ENCODE measurements at regions of chr17 and their contacts with region 1.

Region 1: GRCh38 chr17:9968902-9969617 is 64.0 kb upstream of the RCVRN start:
- DNase-seq: no peak

Region 2: DNA sequence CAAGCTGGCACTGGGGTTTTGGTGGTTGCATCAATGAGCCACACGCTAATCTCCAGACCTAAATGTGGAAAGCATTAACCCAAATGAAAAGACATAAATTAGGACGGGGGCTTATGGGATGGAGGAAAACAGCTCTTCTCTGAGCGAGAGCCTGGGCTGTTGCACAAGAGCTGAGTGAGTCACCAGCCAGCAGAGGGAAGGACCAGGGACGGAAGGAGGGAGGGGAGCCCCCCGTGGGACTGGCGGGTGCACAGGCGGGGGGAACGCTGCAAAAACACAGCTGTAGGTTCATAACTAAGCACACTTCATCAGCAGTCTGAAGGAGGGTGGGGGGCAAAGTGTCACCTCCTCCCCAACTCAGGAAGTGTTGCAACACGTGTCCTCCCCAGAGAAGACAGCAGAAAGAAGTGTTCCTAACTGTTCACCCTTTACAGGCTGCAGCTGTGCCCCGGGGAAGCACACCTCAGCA is 146.0 kb after region 1 on chr17:
- intact Hi-C with region 1: loop called (anchors 10 kb)
- DNase-seq: peak; percentile 56 to 96 (median 83)